Activated T-helper 1 cell treated with anti-CD3 and anti-CD28 coated beads, Interleukin-12 subunit alpha, Interleukin-12 subunit beta, Interleukin-2, Interleukin-4 antibody, amounts not matched to agents 30 ng/mL and 10 ng/mL and 1 ng/mL, durations not matched to agents 14 hours and 24 hours and 36 hours (primary cell): ENCODE measurements at regions of chr6 and their contacts with region 1.

Region 1: DNA sequence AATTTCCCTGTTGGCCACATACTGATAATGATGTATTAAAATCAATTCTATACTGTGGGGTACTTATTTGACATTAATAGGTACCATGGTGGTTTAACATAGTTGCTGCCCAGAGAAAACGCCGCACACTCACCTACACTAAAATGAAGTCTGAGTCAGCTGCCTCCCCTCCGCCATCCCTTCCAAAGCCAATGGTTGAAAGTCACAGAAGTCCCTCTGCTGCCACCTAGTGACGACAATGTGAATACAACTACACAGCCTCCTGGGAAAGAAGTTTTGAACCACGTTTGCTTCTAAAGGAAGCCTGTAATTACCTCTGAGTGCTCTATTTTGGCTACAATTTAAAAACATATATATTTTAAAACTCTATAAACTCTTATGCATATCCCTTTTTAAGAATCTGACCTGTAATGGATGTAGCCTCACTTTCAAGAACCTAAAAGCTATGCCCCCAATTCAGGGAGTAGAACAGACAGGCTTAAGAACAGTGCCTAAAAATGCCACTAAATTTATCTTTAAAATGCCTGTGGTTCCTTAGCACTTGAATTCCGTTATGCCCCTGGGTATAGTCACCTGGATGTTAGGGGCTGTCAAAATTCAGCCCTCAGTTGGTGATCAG is 20.6 kb upstream of the ECI2 start:
- DNase-seq: peak; percentile 70
- H3K4me3 Mint-ChIP-seq: no peak overlapping the region
- H3K27ac Mint-ChIP-seq: no peak overlapping the region
- H3K4me1 Mint-ChIP-seq: peaks cover 6% of the 10 kb centered on the region
- H3K27me3 Mint-ChIP-seq: peaks cover 3% of the 10 kb centered on the region

Region 2: GRCh38 chr6:3913077-3913957 is 242.6 kb before region 1 on chr6:
- intact Hi-C with region 1: no loop called
- DNase-seq: no peak
- H3K4me3 Mint-ChIP-seq: no peak overlapping the region
- H3K27ac Mint-ChIP-seq: no peak overlapping the region
- H3K4me1 Mint-ChIP-seq: peaks cover 31% of the 10 kb centered on the region
- H3K27me3 Mint-ChIP-seq: peaks cover 41% of the 10 kb centered on the region

Region 3: DNA sequence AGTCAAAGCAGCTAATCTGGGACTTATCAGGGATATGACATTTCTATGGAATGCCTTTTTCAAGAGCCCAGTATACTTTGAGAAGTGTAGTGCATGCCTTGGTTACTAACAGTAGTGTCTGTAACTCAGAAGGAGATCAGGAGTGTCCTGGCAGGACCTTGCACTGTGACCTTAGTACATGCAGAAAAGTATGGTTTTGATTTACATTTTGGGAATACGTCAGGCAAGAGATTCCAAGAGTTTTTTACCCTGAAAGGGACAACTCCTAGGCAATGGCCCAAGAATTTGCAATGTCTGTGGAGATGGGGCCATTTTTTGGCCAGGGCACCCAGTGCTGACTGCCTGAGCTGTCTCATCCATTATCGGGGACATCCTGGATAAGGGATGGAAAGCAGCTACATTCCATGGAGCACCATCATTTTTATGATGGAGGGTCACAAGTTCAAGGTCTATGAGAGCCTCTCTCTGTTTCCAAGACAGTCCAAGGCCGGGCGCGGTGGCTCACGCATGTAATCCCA is 226.6 kb before region 1 on chr6:
- intact Hi-C with region 1: loop called (anchors 5 kb)
- DNase-seq: no peak
- H3K4me3 Mint-ChIP-seq: no peak overlapping the region
- H3K27ac Mint-ChIP-seq: no peak overlapping the region
- H3K4me1 Mint-ChIP-seq: no peaks in the 10 kb centered on the region
- H3K27me3 Mint-ChIP-seq: peaks cover 14% of the 10 kb centered on the region

Region 4: GRCh38 chr6:4018172-4018905 is 137.6 kb before region 1 on chr6:
- intact Hi-C with region 1: loop called (anchors 5 kb)
- DNase-seq: peak; percentile 96
- H3K4me3 Mint-ChIP-seq: peak overlapping the region; percentile 99
- H3K27ac Mint-ChIP-seq: peak overlapping the region; percentile 100
- H3K4me1 Mint-ChIP-seq: peaks cover 60% of the 10 kb centered on the region
- H3K27me3 Mint-ChIP-seq: no peaks in the 10 kb centered on the region

Region 5: DNA sequence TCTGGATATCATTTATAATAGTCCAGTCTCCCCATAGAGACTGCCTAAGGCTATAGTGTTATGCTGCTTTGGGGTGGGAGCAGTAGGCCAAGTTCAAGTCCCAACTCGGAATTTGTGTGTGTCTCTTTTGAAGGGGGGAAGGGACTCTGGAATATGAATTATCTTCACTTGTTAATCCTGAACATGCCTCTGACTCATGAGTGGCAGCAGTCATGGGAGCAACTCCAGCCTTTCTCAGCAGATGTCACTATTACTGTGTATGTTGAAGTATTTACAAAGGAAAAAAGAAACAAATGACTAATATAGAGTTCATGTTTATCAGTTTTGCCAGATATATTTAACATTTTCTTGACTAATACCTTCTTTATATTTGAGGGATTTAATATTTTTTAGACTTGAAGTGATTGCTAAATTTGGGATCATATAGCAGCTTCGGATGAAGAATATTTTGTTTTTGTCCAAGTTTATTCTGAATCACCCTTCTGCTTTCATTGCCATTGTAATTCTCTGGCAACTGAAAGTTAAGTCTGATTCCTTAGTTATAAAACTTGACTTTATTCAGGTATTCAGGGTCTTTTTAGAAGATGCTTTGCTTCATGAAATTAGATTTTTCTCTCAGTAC is 100.4 kb before region 1 on chr6:
- intact Hi-C with region 1: loop called (anchors 1 kb)
- DNase-seq: no peak
- H3K4me3 Mint-ChIP-seq: no peak overlapping the region
- H3K27ac Mint-ChIP-seq: no peak overlapping the region
- H3K4me1 Mint-ChIP-seq: peaks cover 41% of the 10 kb centered on the region
- H3K27me3 Mint-ChIP-seq: no peaks in the 10 kb centered on the region

Region 6: GRCh38 chr6:4169028-4169789 is 13.3 kb after region 1 on chr6:
- intact Hi-C with region 1: no loop called
- DNase-seq: no peak
- H3K4me3 Mint-ChIP-seq: no peak overlapping the region
- H3K27ac Mint-ChIP-seq: no peak overlapping the region
- H3K4me1 Mint-ChIP-seq: no peaks in the 10 kb centered on the region
- H3K27me3 Mint-ChIP-seq: peaks cover 2% of the 10 kb centered on the region

Region 7: DNA sequence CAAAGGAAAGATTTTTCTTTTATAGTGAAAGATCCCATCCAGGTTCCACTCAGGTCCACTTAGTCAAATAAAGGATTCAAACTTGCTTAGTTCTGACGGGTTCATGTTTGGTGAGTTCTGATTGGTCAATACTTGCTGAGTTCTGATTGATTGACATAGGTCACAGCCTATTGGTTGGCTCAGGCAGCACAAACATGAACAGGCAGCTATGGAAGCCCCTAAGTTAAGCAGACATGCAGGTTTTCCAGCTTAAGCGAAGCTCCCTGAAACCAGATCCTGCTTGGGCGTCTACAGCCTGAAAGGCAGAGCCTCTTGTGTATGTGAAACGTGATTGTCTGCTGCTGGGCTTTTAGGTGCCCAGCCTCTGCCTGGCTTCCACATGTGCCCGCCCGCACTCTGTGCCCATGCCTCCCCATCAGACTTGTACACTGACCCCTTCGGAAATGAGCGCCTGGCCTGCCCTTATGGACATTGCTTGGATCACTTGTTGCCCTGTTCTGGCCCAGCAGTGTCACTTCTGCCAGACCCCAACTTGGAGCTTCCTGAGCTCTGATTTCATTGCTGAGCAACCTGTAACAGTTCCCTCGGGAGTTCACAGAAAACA is 24.8 kb after region 1 on chr6:
- intact Hi-C with region 1: no loop called
- DNase-seq: no peak
- H3K4me3 Mint-ChIP-seq: no peak overlapping the region
- H3K27ac Mint-ChIP-seq: no peak overlapping the region
- H3K4me1 Mint-ChIP-seq: peaks cover 3% of the 10 kb centered on the region
- H3K27me3 Mint-ChIP-seq: peaks cover 13% of the 10 kb centered on the region

Region 8: DNA sequence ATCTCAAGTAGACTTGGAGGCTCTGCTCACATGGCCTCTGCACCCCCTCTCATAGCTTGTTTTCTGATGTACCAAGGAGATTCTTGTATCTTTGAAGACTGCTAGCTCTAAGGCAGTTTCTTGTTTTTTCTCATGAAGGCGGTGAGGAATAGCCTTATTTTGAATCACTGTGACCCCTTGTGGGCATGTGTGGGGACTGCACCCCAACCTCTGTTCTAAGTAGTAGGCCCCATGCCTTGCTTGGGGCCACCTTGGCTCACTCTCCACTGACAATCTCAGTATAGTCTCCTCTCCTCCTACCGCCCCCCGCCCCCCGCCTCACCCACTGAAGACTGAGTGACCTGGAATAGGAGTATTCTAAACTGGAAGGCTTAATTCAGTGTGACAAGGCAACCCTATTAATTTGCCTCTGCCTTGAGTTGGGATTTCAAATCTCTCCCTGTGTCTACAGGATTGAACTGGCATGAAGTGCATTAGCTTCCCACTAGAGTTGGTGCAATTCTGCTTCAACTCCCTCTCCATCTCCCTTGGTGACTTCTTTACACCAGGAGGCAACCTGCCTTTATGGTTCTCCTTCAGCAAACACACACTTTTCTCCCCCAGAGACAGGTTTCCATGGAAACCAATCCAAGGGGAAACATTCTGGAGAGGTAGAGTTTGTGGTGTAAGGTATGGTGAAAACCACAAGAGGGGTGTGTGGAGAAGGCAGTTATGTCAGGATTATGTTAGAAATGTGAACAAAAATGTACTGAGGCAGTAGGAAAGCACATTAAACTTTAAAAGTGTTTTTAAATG is 54.9 kb after region 1 on chr6:
- intact Hi-C with region 1: loop called (anchors 1 kb)
- DNase-seq: peak; percentile 27
- H3K4me3 Mint-ChIP-seq: no peak overlapping the region
- H3K27ac Mint-ChIP-seq: no peak overlapping the region
- H3K4me1 Mint-ChIP-seq: peaks cover 20% of the 10 kb centered on the region
- H3K27me3 Mint-ChIP-seq: no peaks in the 10 kb centered on the region

Region 9: GRCh38 chr6:4402439-4402976 is 246.6 kb after region 1 on chr6:
- intact Hi-C with region 1: no loop called
- DNase-seq: no peak
- H3K4me3 Mint-ChIP-seq: no peak overlapping the region
- H3K27ac Mint-ChIP-seq: no peak overlapping the region
- H3K4me1 Mint-ChIP-seq: no peaks in the 10 kb centered on the region
- H3K27me3 Mint-ChIP-seq: no peaks in the 10 kb centered on the region

Region 10: DNA sequence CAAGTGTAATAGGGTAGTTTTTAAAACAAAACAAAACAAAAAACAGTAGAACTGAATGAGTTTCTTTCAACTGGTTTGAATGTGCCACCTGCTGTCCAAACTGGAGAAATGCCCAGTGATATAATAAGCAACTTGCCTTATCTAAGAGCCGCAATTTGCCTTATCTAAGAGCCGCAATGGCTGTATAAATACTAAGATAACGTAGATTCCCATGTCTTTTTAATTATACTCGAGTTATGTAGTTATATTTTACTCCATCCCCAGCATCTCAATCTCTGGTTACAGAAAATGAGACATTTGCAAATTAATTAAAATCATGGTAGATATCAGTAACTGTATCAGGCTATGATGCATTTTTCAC is 780.7 kb after region 1 on chr6:
- intact Hi-C with region 1: loop called (anchors 5 kb)
- DNase-seq: no peak
- H3K4me3 Mint-ChIP-seq: no peak overlapping the region
- H3K27ac Mint-ChIP-seq: no peak overlapping the region
- H3K4me1 Mint-ChIP-seq: peaks cover 45% of the 10 kb centered on the region
- H3K27me3 Mint-ChIP-seq: no peaks in the 10 kb centered on the region